HEK293T (cell line): ENCODE measurements at regions of chr11 and their contacts with region 1.

Region 1: GRCh38 chr11:128948589-128948988 is 5.9 kb upstream of the TP53AIP1 start:
- DNase-seq: no peak

Region 2: DNA sequence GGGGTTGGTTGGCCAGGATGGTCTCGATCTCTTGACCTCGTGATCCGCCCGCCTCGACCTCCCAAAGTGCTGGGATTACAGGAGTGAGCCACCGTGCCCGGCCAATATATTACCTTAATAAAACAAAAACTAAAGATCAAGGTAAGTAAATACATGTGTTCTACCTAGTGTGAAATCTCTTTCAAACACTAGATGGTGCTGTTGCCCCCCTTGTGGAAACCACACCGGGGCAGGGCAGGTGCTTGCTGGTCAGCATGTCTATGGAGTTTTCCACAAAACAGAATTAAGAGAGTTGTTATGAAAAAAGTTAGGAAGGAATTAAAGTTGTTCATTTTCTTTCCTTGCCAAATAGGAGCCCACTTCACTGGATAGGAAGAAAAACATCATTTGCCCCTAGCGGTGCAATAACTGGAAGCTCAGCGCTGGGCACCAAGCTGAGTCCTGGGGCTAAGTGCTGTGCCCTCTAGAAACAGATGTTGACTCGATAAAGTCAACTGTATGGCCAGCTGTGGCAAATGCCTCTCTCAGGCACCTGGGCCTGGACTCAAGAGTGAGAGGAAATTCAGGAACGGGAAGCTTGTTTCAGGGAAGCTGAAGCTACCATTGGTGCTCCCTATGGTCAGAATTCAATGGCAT is 63.8 kb before region 1 on chr11:
- CTCF ChIA-PET with region 1: interaction called, 12 read pairs
- POLR2A ChIA-PET with region 1: no interaction called
- DNase-seq: peak; percentile 60